Panc1 (cell line): ENCODE measurements at regions of chr9 and their contacts with region 1.

Region 1: DNA sequence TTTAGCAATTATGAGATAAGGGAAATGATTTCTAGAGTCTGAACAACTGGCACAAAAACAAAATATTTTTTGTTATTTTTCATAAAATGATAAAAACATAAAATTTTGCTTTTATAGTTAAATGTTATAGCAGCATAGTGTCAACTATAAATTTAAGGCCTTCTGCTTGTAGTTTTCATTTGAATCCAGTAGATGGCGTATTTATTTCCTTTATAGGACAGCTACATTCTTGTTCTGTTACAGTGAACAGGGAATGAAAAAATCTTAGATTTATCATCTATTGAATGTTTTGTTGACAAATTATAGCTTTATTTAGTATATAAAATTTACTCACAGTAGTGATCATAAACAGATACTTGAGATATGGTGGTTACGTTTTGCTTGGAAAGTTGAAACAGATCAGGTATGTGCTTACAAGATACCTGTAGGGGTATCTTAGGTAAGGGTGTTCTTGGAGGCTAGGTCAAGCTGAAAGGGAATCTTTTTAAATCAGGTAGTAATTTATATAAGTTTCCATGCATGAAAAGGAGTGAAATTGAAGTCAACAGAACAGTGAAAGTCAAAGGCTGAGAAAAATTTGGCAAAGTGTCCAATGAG is 239.3 kb upstream of the GRIN3A start:
- DNase-seq: no peak
- ATAC-seq: no peak
- H3K4me3 ChIP-seq: no peak overlapping the region
- H3K27ac ChIP-seq: no peak overlapping the region
- H3K4me1 ChIP-seq: no peaks in the 10 kb centered on the region
- H3K27me3 ChIP-seq: no peaks in the 10 kb centered on the region
- CTCF ChIP-seq: peak; percentile 20; the same call in 1 of the 2 replicates

Region 2: DNA sequence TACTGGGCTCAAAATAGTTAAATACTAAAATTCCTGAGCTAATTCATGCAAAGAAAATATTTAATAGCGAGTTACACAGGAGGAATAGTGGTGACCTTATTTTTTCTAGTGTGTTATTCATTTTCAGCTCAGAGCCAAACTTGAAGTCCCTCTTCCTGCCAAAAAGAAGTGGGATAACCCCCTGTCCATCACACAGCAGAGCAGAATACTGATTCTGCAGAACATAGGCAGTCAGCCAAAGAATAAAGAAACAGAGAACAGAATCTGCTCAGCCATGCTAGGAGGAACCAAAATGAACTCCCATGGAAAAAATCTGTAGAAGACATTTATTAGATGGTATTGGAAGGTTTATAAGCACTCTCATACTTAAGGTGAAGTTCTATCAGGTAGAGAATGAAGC is 189.8 kb before region 1 on chr9:
- CTCF ChIA-PET with region 1: no interaction called
- POLR2A ChIA-PET with region 1: no interaction called
- in situ Hi-C with region 1: no loop called
- intact Hi-C with region 1: no loop called
- DNase-seq: no peak
- ATAC-seq: no peak
- H3K4me3 ChIP-seq: no peak overlapping the region
- H3K27ac ChIP-seq: no peak overlapping the region
- H3K4me1 ChIP-seq: no peaks in the 10 kb centered on the region
- H3K27me3 ChIP-seq: no peaks in the 10 kb centered on the region
- CTCF ChIP-seq: no peak

Region 3: GRCh38 chr9:102035929-102036328 is 58.2 kb after region 1 on chr9:
- CTCF ChIA-PET with region 1: no interaction called
- POLR2A ChIA-PET with region 1: no interaction called
- in situ Hi-C with region 1: no loop called
- intact Hi-C with region 1: loop called (anchors 10 kb)
- DNase-seq: no peak
- ATAC-seq: no peak
- H3K4me3 ChIP-seq: no peak overlapping the region
- H3K27ac ChIP-seq: no peak overlapping the region
- H3K4me1 ChIP-seq: no peaks in the 10 kb centered on the region
- H3K27me3 ChIP-seq: no peaks in the 10 kb centered on the region
- CTCF ChIP-seq: no peak

Region 4: DNA sequence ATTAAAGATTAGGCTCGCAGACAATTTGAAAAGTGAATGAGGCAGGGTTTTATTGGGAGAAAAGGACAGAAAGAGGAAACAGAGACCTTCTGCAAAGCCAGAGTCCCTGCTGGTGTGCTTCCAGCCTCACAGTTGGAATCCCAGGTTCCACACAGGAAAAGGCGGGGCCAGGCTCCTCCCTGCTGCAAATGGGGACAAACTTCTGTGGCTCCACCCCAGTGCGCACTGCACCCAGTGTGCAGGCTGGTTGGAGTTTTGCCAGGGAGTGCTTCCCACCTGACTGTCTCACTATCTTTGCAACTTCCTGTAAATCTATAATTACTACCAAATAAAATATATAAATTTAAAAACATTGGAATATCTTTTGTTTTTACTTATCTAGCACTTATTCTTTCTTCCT is 146.8 kb after region 1 on chr9:
- CTCF ChIA-PET with region 1: no interaction called
- POLR2A ChIA-PET with region 1: no interaction called
- in situ Hi-C with region 1: no loop called
- intact Hi-C with region 1: no loop called
- DNase-seq: no peak
- ATAC-seq: no peak
- H3K4me3 ChIP-seq: no peak overlapping the region
- H3K27ac ChIP-seq: no peak overlapping the region
- H3K4me1 ChIP-seq: no peaks in the 10 kb centered on the region
- H3K27me3 ChIP-seq: no peaks in the 10 kb centered on the region
- CTCF ChIP-seq: no peak